CD14-positive monocyte (primary cell): ENCODE measurements at regions of chr4 and their contacts with region 1.

Region 1: GRCh38 chr4:82900331-82901128 is at the start of gene THAP9:
- DNase-seq: peak; percentile 100
- H3K4me3 ChIP-seq: peak within 1 kb of the TSS; percentile 62 to 99 (median 99)
- H3K4me3 Mint-ChIP-seq: no peak within 1 kb of the TSS
- H3K27ac ChIP-seq: peak within 1 kb of the TSS; percentile 99 to 100
- H3K27ac Mint-ChIP-seq: no peak within 1 kb of the TSS
- H3K4me1 ChIP-seq: peaks cover 21 to 44% of the 10 kb centered on the region in 2 donors
- H3K4me1 Mint-ChIP-seq: peaks cover 27% of the 10 kb centered on the region
- H3K27me3 ChIP-seq: no peaks in the 10 kb centered on the region
- H3K27me3 Mint-ChIP-seq: no peaks in the 10 kb centered on the region
- CTCF ChIP-seq: no peak
- polyA plus RNA-seq, gene THAP9: 1.4 to 1.9 (median 1.4) TPM

Region 2: GRCh38 chr4:82428969-82429727 is 471.4 kb before region 1 on chr4:
- intact Hi-C with region 1: loop called in 1 of 2 experiments (anchors 10 kb)
- DNase-seq: peak; percentile 90 to 94 (median 92)
- H3K4me3 ChIP-seq: peak overlapping the region; percentile 57 to 98 (median 80)
- H3K4me3 Mint-ChIP-seq: peak overlapping the region; percentile 99
- H3K27ac ChIP-seq: peak overlapping the region; percentile 90 to 99
- H3K27ac Mint-ChIP-seq: peak overlapping the region; percentile 96 to 99 (median 98)
- H3K4me1 ChIP-seq: peaks cover 19 to 39% of the 10 kb centered on the region in 2 donors
- H3K4me1 Mint-ChIP-seq: peaks cover 44% of the 10 kb centered on the region
- H3K27me3 ChIP-seq: no peaks in the 10 kb centered on the region
- H3K27me3 Mint-ChIP-seq: no peaks in the 10 kb centered on the region
- CTCF ChIP-seq: peak; percentile 98

Region 3: DNA sequence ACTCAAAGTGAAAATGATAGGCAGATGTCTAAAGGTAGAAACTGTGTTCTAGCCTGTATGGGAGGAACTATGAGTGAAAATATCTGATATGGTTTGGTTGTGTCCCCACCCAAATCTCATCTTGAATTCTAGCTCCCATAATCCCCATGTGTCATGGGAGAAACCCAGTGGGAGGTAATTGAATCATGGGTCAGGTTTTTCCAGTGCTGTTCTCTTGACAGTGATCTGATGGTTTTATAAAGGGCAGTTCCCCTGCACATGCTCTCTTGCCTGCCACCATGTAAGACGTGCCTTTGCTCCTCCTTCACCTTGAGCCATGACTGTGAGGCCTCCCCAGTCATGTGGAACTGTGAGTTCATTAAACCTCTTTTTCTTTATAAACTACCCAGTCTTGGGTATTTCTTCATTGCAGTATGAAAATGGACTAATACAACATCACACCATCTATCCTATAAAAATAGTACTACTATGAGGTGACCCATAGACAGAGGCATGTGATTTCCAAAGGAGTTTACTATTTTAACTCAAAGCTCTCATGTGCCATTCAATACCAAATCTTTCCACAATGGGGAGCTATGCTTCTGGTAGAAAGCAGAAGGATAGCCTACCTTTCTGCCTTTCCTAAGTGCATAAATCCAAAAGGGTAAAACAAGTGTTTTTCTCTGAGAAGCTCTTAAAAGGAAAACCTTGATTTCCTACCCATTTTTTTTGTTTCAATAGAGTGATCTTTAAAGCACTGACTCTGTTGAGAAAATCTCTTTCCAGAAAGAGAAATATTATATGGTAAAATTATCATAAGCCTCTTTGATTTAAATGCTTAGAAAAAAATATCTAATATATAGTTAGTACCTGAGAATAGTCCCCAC is 48.4 kb before region 1 on chr4:
- intact Hi-C with region 1: loop called in 1 of 2 experiments (anchors 10 kb)
- DNase-seq: peak; percentile 12 to 37 (median 33)
- H3K4me3 ChIP-seq: no peak overlapping the region
- H3K4me3 Mint-ChIP-seq: no peak overlapping the region
- H3K27ac ChIP-seq: peak overlapping the region in 1 of 2 donors; percentile 41
- H3K27ac Mint-ChIP-seq: peak overlapping the region in 4 of 7 donors; percentile 31 to 71 (median 69)
- H3K4me1 ChIP-seq: no peaks in the 10 kb centered on the region
- H3K4me1 Mint-ChIP-seq: no peaks in the 10 kb centered on the region
- H3K27me3 ChIP-seq: no peaks in the 10 kb centered on the region
- H3K27me3 Mint-ChIP-seq: no peaks in the 10 kb centered on the region
- CTCF ChIP-seq: peak; percentile 55

Region 4: DNA sequence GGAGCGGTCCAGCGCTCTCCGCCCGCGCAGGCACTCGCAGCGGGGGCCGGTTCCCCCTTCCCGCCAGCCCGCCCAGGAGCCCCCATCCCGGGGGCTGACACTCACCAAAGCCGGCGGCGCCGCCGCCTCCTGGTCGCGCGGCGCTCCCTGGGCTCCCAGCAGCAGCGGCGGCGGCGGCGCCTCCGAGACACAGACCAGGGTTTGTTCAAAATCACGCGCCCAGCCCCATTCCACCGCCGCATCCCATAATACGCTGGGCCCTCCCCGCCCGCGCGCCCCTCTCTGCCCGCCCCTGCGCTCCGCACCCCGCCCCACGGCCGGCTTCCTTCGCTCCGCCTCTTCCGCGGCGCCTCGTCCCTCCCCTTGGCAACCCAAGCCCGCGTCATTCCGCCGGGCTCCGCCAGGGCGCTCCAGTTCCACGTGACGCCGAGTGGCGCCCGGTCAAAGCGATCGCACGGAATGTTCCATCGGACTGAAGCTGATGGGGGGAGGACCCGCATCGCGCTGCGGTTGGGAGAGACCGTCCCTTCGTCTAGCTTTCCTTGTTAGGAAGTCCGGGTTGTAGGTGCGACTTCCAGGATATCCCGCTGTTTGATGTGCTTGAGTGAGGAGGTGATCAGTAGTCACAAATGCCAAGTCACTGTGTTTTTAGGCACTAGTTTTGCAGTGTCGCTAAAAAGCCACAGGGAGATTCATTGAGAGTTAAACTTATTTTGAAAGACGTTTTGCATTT is 112.3 kb after region 1 on chr4:
- intact Hi-C with region 1: loop called (anchors 5 kb)
- DNase-seq: peak; percentile 95 to 99 (median 96)
- H3K4me3 ChIP-seq: peak overlapping the region; percentile 80 to 98 (median 94)
- H3K4me3 Mint-ChIP-seq: peak overlapping the region; percentile 82 to 92
- H3K27ac ChIP-seq: peak overlapping the region; percentile 84 to 99
- H3K27ac Mint-ChIP-seq: peak overlapping the region; percentile 94 to 99 (median 98)
- H3K4me1 ChIP-seq: peaks cover 31 to 35% of the 10 kb centered on the region in 2 donors
- H3K4me1 Mint-ChIP-seq: peaks cover 39% of the 10 kb centered on the region
- H3K27me3 ChIP-seq: no peaks in the 10 kb centered on the region
- H3K27me3 Mint-ChIP-seq: peaks cover 0 to 1% (median 0%) of the 10 kb centered on the region in 3 donors
- CTCF ChIP-seq: peak; percentile 64

Region 5: GRCh38 chr4:83308672-83309071 is 408.1 kb after region 1 on chr4:
- intact Hi-C with region 1: no loop called
- DNase-seq: no peak
- H3K4me3 ChIP-seq: no peak overlapping the region
- H3K4me3 Mint-ChIP-seq: no peak overlapping the region
- H3K27ac ChIP-seq: no peak overlapping the region
- H3K27ac Mint-ChIP-seq: no peak overlapping the region
- H3K4me1 ChIP-seq: no peaks in the 10 kb centered on the region
- H3K4me1 Mint-ChIP-seq: peaks cover 1% of the 10 kb centered on the region
- H3K27me3 ChIP-seq: no peaks in the 10 kb centered on the region
- H3K27me3 Mint-ChIP-seq: peaks cover 0 to 1% (median 0%) of the 10 kb centered on the region in 3 donors
- CTCF ChIP-seq: no peak

Region 6: DNA sequence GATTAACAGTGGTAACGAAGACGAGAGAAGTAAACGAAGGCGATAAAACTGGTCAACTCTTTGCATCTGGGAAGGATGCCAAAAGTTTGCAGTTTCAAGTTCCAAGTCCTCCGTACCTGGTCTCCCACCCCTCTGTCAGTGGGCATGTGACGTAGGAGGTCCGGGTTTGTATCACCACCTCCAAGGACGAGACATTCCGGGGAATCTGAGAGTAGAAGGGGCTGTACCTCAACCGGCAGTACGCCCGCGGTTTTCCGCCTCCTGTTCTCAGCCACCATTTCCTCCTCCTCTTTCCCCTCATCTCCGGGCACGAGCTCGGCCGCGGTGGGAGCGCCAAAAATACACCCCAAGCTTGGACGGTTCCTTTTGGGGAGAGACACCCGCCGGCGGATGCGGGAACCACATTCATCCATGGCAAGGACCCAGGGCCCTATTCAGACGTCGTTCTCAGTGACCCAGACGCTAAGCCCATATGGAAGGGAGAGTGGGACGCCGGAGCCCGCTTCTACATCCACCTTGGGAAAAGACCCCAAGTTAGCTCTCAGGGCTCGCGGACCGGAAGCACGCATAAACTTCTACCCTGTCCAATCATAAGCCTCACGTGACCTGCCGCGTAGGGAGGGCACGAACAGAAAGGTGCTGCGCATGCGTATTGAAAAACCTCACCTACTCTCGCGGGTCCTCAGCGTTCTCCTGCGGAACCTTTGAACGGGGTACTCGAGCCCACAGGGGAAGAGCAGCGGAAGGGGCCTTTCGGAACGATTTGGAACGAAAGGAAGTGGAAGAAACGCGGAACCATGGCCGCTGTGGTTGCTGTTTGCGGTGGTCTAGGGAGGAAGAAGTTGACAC is 555.0 kb after region 1 on chr4 and contains the starts of genes HELQ and MRPS18C:
- intact Hi-C with region 1: loop called in 1 of 2 experiments (anchors 2 kb)
- DNase-seq: peak; percentile 98 to 99 (median 99)
- H3K4me3 ChIP-seq: peak within 1 kb of the TSS; percentile 94 to 97 (median 95)
- H3K4me3 Mint-ChIP-seq: peak within 1 kb of the TSS; percentile 96 to 98
- H3K27ac ChIP-seq: peak within 1 kb of the TSS; percentile 99
- H3K27ac Mint-ChIP-seq: peak within 1 kb of the TSS; percentile 98 to 100 (median 100)
- H3K4me1 ChIP-seq: peaks cover 21 to 31% of the 10 kb centered on the region in 2 donors
- H3K4me1 Mint-ChIP-seq: peaks cover 27% of the 10 kb centered on the region
- H3K27me3 ChIP-seq: no peaks in the 10 kb centered on the region
- H3K27me3 Mint-ChIP-seq: peaks cover 0 to 3% (median 1%) of the 10 kb centered on the region in 3 donors
- CTCF ChIP-seq: peak; percentile 34
- polyA plus RNA-seq, gene HELQ: 7.0 to 11.3 (median 11.1) TPM
- polyA plus RNA-seq, gene MRPS18C: 13.6 to 70.5 (median 42.4) TPM